ENCODE measurements at regions of chr5 and their contacts with region 1.

Region 1: GRCh38 chr5:143824851-143825720 is 13.1 kb downstream of the HMHB1 start:
- DNase-seq: peak; percentile 90
- H3K4me3 Mint-ChIP-seq: no peak overlapping the region
- H3K27ac Mint-ChIP-seq: no peak overlapping the region
- H3K4me1 Mint-ChIP-seq: peaks cover 17% of the 10 kb centered on the region
- H3K27me3 Mint-ChIP-seq: no peaks in the 10 kb centered on the region

Region 2: GRCh38 chr5:142748568-142749249 is 1076.4 kb before region 1 on chr5:
- CTCF ChIA-PET with region 1: no interaction called
- intact Hi-C with region 1: loop called (anchors 1 kb)
- DNase-seq: peak; percentile 76
- H3K4me3 Mint-ChIP-seq: no peak overlapping the region
- H3K27ac Mint-ChIP-seq: no peak overlapping the region
- H3K4me1 Mint-ChIP-seq: peaks cover 13% of the 10 kb centered on the region
- H3K27me3 Mint-ChIP-seq: no peaks in the 10 kb centered on the region

Region 3: DNA sequence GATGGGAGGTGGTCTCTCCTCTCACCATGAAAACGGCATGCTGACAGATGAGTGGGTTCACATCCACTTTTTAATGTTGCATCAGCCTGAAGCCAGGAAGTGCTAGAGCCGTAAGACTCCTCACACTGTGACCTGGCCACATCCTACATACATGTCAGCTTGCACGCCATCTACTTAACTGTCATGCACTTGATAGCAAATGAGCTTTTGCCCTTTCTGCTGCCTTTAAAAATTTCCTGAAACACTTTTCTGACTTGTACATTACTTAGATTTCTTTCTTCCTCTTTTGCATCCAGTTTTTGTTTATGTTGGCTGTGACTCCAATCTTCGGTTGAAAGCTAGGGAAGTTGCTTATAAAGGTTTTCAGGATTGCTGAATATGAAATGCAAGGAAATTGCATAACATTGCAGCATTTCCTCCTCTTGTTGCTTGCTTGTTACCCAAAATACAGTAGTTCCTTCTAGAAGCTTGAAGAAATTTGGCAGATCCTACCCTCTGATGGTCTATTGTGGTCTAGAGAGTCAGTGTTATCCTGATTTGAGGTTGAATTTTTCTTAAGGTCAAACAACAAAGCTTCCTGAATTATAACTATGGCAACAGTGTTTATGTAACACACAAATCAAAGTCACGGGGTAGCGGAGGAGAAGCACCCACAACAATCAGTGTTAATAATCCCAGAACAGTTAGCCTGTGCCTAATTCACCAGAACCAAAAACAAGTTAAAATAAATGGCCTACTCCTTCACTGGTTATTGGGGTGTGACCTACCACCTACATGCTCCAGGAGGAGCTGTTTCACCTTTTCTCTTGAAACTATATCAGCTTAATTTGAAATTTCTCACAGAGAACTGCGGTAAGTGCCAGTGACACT is 822.4 kb before region 1 on chr5:
- CTCF ChIA-PET with region 1: interaction called, 5 read pairs
- intact Hi-C with region 1: loop called (anchors 1 kb)
- DNase-seq: peak; percentile 82
- H3K4me3 Mint-ChIP-seq: peak overlapping the region; percentile 2
- H3K27ac Mint-ChIP-seq: peak overlapping the region; percentile 92
- H3K4me1 Mint-ChIP-seq: peaks cover 53% of the 10 kb centered on the region
- H3K27me3 Mint-ChIP-seq: no peaks in the 10 kb centered on the region

Region 4: GRCh38 chr5:143229896-143230675 is 595.0 kb before region 1 on chr5:
- CTCF ChIA-PET with region 1: no interaction called
- intact Hi-C with region 1: loop called (anchors 10 kb)
- DNase-seq: peak; percentile 74
- H3K4me3 Mint-ChIP-seq: peak overlapping the region; percentile 46
- H3K27ac Mint-ChIP-seq: peak overlapping the region; percentile 69
- H3K4me1 Mint-ChIP-seq: peaks cover 24% of the 10 kb centered on the region
- H3K27me3 Mint-ChIP-seq: no peaks in the 10 kb centered on the region

Region 5: GRCh38 chr5:143648696-143649095 is 176.4 kb before region 1 on chr5:
- CTCF ChIA-PET with region 1: interaction called, 4 read pairs
- intact Hi-C with region 1: loop called (anchors 2 kb)
- DNase-seq: peak; percentile 18
- H3K4me3 Mint-ChIP-seq: no peak overlapping the region
- H3K27ac Mint-ChIP-seq: no peak overlapping the region
- H3K4me1 Mint-ChIP-seq: peaks cover 2% of the 10 kb centered on the region
- H3K27me3 Mint-ChIP-seq: no peaks in the 10 kb centered on the region

Region 6: GRCh38 chr5:144142139-144142823 is 317.2 kb after region 1 on chr5:
- CTCF ChIA-PET with region 1: no interaction called
- intact Hi-C with region 1: loop called (anchors 1 kb)
- DNase-seq: no peak
- H3K4me3 Mint-ChIP-seq: no peak overlapping the region
- H3K27ac Mint-ChIP-seq: no peak overlapping the region
- H3K4me1 Mint-ChIP-seq: peaks cover 2% of the 10 kb centered on the region
- H3K27me3 Mint-ChIP-seq: no peaks in the 10 kb centered on the region